ENCODE measurements at regions of chr4 and their contacts with region 1.

Region 1: GRCh38 chr4:153466081-153466948 is at the start of gene TMEM131L:
- DNase-seq: peak; percentile 67
- ATAC-seq: peak; percentile 47
- H3K4me3 Mint-ChIP-seq: peak within 1 kb of the TSS; percentile 97
- H3K27ac Mint-ChIP-seq: peak within 1 kb of the TSS; percentile 98
- H3K4me1 Mint-ChIP-seq: peaks cover 55% of the 10 kb centered on the region
- H3K27me3 Mint-ChIP-seq: no peaks in the 10 kb centered on the region
- CTCF ChIP-seq: no peak
- total RNA-seq, gene TMEM131L: 170 and 193 TPM in 2 replicates

Region 2: GRCh38 chr4:153249199-153250041 is 216.9 kb before region 1 on chr4:
- CTCF ChIA-PET with region 1: no interaction called
- POLR2A ChIA-PET with region 1: no interaction called
- intact Hi-C with region 1: loop called (anchors 2 kb)
- DNase-seq: peak; percentile 92
- ATAC-seq: peak; percentile 99
- H3K4me3 Mint-ChIP-seq: peak overlapping the region; percentile 88
- H3K27ac Mint-ChIP-seq: peak overlapping the region; percentile 88
- H3K4me1 Mint-ChIP-seq: peaks cover 30% of the 10 kb centered on the region
- H3K27me3 Mint-ChIP-seq: no peaks in the 10 kb centered on the region
- CTCF ChIP-seq: no peak

Region 3: DNA sequence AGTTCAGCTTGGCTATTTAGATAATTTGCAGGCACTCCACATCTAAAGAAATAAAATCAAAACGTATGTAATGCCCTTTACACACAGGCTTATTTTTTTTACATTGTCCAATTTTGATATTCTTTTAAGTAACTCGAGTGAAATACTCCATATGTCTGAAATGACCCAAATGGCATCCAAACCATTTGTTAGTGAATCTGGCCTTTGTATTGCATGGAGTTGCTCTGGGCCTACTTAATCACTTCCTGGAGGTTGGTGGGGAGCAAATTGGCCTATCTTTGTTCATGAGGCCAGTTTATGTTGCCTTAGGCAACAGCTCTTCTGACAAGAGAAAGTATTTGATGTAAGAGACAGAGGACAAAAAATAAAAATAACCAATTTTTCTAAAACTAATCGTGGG is 47.8 kb before region 1 on chr4:
- CTCF ChIA-PET with region 1: no interaction called
- POLR2A ChIA-PET with region 1: no interaction called
- intact Hi-C with region 1: no loop called
- DNase-seq: no peak
- ATAC-seq: no peak
- H3K4me3 Mint-ChIP-seq: no peak overlapping the region
- H3K27ac Mint-ChIP-seq: no peak overlapping the region
- H3K4me1 Mint-ChIP-seq: peaks cover 20% of the 10 kb centered on the region
- H3K27me3 Mint-ChIP-seq: no peaks in the 10 kb centered on the region
- CTCF ChIP-seq: no peak

Region 4: GRCh38 chr4:153432968-153433753 is 33.2 kb before region 1 on chr4:
- CTCF ChIA-PET with region 1: interaction called, 30 read pairs
- POLR2A ChIA-PET with region 1: interaction called, 97 read pairs
- intact Hi-C with region 1: loop called (anchors 1 kb)
- DNase-seq: no peak
- ATAC-seq: peak; percentile 86
- H3K4me3 Mint-ChIP-seq: peak overlapping the region; percentile 80
- H3K27ac Mint-ChIP-seq: peak overlapping the region; percentile 93
- H3K4me1 Mint-ChIP-seq: peaks cover 71% of the 10 kb centered on the region
- H3K27me3 Mint-ChIP-seq: no peaks in the 10 kb centered on the region
- CTCF ChIP-seq: peak; percentile 35

Region 5: DNA sequence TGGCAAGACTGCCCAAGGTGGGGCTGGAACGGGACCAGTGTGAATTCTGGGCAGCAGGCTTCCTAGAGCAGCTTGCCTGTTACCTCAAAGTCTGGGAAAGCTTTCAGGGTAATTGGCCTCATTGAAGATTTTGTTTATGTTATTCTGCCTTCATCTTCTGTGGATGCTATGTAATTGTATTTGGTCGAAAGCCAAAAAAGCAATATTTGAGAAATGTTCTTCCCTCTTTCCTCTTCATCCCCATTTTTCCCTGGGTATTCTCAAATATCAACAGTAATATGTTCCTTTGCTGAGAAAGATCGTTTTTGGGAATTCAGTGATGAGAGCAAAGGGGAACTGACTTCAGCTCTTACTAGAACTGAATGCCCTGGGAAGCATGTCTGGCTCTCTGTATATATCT is 12.8 kb after region 1 on chr4:
- CTCF ChIA-PET with region 1: interaction called, 6 read pairs
- POLR2A ChIA-PET with region 1: interaction called, 37 read pairs
- intact Hi-C with region 1: no loop called
- DNase-seq: no peak
- ATAC-seq: no peak
- H3K4me3 Mint-ChIP-seq: peak overlapping the region; percentile 44
- H3K27ac Mint-ChIP-seq: peak overlapping the region; percentile 75
- H3K4me1 Mint-ChIP-seq: peaks cover 93% of the 10 kb centered on the region
- H3K27me3 Mint-ChIP-seq: no peaks in the 10 kb centered on the region
- CTCF ChIP-seq: no peak

Region 6: DNA sequence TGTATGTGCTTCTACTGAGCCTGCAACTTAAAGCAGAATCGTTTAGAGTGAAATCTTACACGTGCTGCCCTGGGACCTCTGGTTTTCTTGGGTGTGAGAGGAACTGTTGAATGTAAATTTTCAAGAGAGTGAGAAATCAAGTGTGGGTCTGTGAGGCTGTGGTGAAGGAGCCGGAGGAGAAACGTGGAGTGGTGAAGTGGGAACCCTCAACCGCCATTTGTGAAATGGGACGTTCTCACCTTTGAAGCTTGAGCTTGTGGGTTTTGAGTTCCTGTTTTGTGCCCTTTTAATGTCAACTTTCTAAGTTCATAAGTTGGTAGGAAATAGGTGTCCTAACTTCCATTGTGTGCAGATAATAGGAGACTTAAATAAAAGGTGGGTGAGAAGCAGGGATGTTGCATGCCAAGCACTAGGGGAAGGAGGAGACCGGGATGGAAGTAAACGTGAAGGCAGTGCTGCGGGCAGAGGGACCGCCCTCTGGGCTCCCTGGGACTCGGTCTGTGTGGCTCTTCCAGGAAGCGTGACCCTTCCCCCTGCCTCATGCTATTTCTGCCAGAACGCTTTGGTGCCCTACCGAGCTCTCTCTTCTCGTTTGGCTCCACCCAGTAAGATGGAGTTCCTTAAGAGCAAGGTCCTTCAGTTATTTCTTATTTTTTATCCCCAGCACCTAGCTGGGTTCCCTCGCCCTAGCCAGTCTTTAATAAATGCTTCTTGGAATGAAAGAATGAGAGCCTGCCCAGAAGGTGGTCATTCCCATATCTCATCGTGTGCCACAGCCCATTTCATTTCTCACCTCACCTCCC is 55.9 kb after region 1 on chr4:
- CTCF ChIA-PET with region 1: interaction called, 6 read pairs
- POLR2A ChIA-PET with region 1: interaction called, 41 read pairs
- intact Hi-C with region 1: loop called (anchors 1 kb)
- DNase-seq: no peak
- ATAC-seq: peak; percentile 25
- H3K4me3 Mint-ChIP-seq: peak overlapping the region; percentile 71
- H3K27ac Mint-ChIP-seq: peak overlapping the region; percentile 90
- H3K4me1 Mint-ChIP-seq: peaks cover 99% of the 10 kb centered on the region
- H3K27me3 Mint-ChIP-seq: no peaks in the 10 kb centered on the region
- CTCF ChIP-seq: no peak